ENCODE measurements at regions of chr6 and their contacts with region 1.

Region 1: DNA sequence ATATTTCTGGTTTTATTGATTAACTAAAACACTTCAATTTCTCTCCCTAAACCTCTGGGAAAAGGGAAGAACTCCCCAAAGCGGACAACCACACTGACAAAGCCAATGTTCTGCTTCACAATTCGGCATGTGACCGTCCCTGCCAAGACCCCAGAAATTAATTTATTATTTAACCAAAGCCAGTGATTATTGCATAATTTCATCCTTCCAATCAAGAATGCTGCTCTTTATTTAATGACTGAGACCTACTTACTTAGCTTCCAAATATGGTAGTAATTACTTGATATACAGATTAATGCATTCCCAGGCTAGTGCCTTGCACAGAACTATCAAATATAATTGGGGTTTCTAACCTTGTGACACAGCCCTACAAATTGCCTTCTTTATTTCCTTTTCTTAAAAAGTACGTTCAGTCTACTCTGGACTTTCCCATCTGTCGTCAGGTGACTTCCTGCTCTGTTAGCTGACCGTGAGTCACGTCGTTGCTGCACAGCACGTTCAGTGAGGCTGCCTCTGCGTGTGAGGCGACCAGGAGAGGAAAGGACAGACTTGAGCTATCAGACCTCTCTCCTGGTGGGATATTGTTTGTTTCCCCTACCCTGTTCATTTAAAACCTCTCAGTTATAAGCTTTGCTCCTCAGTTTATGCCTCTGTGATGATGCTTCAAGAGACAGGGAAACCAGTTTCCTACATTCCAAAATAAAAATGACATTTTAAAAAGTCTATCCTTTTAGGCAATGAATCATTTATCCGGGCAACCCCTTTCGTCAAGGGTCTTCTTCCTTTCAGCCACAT is 55.7 kb upstream of the TNFAIP3 start:
- DNase-seq: peak; percentile 57 to 92 (median 72)
- ATAC-seq: peak; percentile 92
- H3K4me3 ChIP-seq: no peak overlapping the region
- H3K27ac ChIP-seq: peak overlapping the region; percentile 74
- H3K4me1 ChIP-seq: peaks cover 23 to 33% of the 10 kb centered on the region in 2 experiments
- H3K27me3 ChIP-seq: no peaks in the 10 kb centered on the region
- CTCF ChIP-seq: no peak
- EP300 ChIP-seq: peak; percentile 67
- POLR2A ChIP-seq: peak; percentile 59; the same call in 1 of the 2 replicates
- RAD21 ChIP-seq: peak in 1 of 2 experiments; percentile 3; a peak in 1 of 4 replicates

Region 2: GRCh38 chr6:137475103-137475502 is 336.2 kb before region 1 on chr6:
- CTCF ChIA-PET with region 1: no interaction called
- POLR2A ChIA-PET with region 1: no interaction called
- in situ Hi-C with region 1: no loop called
- intact Hi-C with region 1: no loop called
- DNase-seq: peak in 2 of 4 experiments; percentile 43 to 48
- ATAC-seq: no peak
- H3K4me3 ChIP-seq: no peak overlapping the region
- H3K27ac ChIP-seq: no peak overlapping the region
- H3K4me1 ChIP-seq: no peaks in the 10 kb centered on the region
- H3K27me3 ChIP-seq: peaks cover 0 to 5% of the 10 kb centered on the region in 2 experiments; a peak in 3 of 5 replicates
- CTCF ChIP-seq: peak; percentile 29 to 45 (median 33); a peak in 3 of 6 replicates
- EP300 ChIP-seq: no peak
- POLR2A ChIP-seq: no peak
- RAD21 ChIP-seq: peak in 1 of 2 experiments; percentile 17; a peak in 1 of 4 replicates

Region 3: GRCh38 chr6:137861550-137862337 is 50.4 kb after region 1 on chr6:
- CTCF ChIA-PET with region 1: no interaction called
- POLR2A ChIA-PET with region 1: interaction called, 8 read pairs
- in situ Hi-C with region 1: no loop called
- intact Hi-C with region 1: loop called (anchors 2 kb)
- DNase-seq: peak in 1 of 4 experiments; percentile 71
- ATAC-seq: peak; percentile 45
- H3K4me3 ChIP-seq: peak overlapping the region; percentile 23
- H3K27ac ChIP-seq: peak overlapping the region; percentile 96
- H3K4me1 ChIP-seq: peaks cover 22 to 70% of the 10 kb centered on the region in 2 experiments
- H3K27me3 ChIP-seq: no peaks in the 10 kb centered on the region
- CTCF ChIP-seq: no peak
- EP300 ChIP-seq: no peak
- POLR2A ChIP-seq: no peak
- RAD21 ChIP-seq: no peak